Left cardiac atrium (tissue), 4 donors: ENCODE measurements at regions of chr1 and their contacts with region 1.

Region 1: GRCh38 chr1:5514519-5515183 is 477.6 kb downstream of the NPHP4 start:
- DNase-seq: peak; percentile 70
- ATAC-seq: peak; percentile 57 to 74

Region 2: GRCh38 chr1:5198328-5198727 is 316.3 kb before region 1 on chr1:
- intact Hi-C with region 1: no loop called
- DNase-seq: no peak
- ATAC-seq: no peak

Region 3: GRCh38 chr1:5637171-5637570 is 122.5 kb after region 1 on chr1:
- intact Hi-C with region 1: no loop called
- DNase-seq: no peak
- ATAC-seq: no peak

Region 4: DNA sequence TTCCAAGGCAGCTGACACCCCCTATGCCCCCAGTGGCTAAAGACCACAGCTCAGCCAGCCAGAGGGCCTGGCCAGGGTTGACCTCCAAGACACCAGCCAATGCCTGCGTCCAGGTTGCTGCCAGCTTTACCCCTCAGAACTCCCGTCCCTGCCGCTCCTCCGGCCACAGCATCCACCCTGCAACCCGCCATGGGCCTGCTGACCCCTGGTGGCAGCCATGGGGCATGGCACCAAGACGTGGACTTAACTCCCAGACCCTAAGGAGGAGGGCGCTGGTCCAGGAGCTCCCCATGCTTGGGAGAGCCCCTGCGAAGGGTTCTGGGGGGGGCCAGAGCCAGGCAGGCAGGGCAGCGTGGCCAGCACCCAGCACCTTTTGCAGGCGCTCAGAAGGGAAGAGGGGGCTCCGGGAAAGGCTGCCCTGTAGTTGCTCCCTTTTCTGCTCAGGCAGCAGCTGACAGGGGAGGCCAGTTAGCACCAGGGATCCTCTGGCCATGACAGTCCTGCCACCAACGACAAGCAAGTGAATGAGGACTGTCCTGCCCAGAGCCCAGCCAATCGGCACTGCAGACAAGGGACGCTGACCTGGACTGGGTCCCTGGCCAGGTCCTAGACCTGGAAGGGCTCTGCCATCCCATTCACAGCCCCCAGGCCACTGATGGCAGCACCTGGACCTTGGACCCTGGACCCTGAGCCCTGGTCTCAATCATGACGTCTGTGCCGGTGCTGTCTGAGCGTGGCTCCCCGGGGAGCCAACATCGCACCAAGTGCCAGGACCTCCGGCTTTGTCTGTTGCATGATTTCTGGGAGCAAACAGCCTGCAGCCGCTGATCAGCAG is 231.3 kb after region 1 on chr1:
- intact Hi-C with region 1: loop called (anchors 2 to 5 kb)
- DNase-seq: peak; percentile 72
- ATAC-seq: peak; percentile 82 to 86

Region 5: GRCh38 chr1:5913078-5913845 is 398.6 kb after region 1 on chr1:
- intact Hi-C with region 1: loop called in 1 of 2 experiments (anchors 5 kb)
- DNase-seq: no peak
- ATAC-seq: no peak

Region 6: DNA sequence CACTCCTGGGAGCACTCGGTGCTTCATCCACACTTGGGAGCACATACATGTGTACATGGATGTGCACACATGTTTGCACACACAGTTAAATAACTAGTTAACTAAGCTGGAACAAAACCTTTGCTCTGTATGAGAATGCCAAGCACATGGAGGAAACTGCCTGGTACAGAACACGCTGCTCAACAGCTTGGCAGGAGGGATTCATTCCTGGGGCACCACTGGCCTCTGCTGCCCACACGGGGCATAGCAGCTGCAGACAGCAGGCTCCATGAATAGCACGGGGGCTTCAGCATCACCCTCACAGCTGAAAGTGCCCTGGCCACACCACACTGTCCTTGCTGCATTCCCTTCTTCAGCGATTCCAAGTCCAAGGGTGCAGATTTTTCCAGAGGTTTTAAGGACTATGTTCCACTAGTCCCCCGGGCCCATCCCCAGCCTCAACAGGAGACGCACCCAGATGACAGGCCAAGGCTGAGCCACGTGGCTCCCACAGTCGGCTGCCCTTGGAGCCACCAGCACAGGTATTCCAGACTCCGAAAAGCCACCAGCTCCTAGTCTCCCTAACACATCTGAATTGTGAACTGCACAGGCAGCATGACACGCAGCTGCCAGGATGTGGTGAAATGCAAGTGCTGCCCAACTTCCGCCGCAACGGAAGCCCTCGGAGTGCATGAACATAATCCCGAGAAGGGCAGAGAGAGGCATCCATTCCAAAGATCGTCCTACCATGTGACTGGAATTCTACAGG is 460.7 kb after region 1 on chr1:
- intact Hi-C with region 1: loop called in 1 of 2 experiments (anchors 10 kb)
- DNase-seq: no peak
- ATAC-seq: peak; percentile 78 to 92